ENCODE measurements at regions of chr2 and their contacts with region 1.

Region 1: DNA sequence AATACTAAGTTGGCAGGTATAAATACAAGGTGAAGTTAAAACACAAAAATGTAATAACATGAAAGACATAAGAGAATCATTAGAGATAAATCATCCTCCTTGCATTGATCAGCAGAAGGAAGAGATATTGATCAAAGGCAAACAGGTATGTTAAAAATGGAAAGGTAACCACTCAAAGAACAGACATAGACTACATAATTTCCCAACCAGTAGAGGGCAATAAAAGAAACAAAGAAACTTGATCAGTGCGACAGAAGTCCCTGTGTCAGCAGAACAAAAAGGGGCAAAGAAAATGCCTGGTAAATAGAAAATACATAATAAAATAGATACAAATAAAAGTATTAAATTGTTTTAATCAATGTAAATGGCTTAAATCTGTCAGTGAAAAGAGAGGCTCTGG is 53.6 kb downstream of the FAM228A start:
- DNase-seq: no peak
- H3K4me3 ChIP-seq: no peak overlapping the region
- H3K27ac ChIP-seq: no peak overlapping the region
- H3K4me1 ChIP-seq: no peaks in the 10 kb centered on the region
- H3K27me3 ChIP-seq: no peaks in the 10 kb centered on the region
- CTCF ChIP-seq: peak in 1 of 2 donors; percentile 47

Region 2: GRCh38 chr2:23720705-23721453 is 507.6 kb before region 1 on chr2:
- CTCF ChIA-PET with region 1: no interaction called
- dilution Hi-C with region 1: no loop called
- in situ Hi-C with region 1: no loop called
- intact Hi-C with region 1: no loop called
- DNase-seq: no peak
- H3K4me3 ChIP-seq: no peak overlapping the region
- H3K27ac ChIP-seq: no peak overlapping the region
- H3K4me1 ChIP-seq: peaks cover 9% of the 10 kb centered on the region
- H3K27me3 ChIP-seq: no peaks in the 10 kb centered on the region
- CTCF ChIP-seq: no peak

Region 3: DNA sequence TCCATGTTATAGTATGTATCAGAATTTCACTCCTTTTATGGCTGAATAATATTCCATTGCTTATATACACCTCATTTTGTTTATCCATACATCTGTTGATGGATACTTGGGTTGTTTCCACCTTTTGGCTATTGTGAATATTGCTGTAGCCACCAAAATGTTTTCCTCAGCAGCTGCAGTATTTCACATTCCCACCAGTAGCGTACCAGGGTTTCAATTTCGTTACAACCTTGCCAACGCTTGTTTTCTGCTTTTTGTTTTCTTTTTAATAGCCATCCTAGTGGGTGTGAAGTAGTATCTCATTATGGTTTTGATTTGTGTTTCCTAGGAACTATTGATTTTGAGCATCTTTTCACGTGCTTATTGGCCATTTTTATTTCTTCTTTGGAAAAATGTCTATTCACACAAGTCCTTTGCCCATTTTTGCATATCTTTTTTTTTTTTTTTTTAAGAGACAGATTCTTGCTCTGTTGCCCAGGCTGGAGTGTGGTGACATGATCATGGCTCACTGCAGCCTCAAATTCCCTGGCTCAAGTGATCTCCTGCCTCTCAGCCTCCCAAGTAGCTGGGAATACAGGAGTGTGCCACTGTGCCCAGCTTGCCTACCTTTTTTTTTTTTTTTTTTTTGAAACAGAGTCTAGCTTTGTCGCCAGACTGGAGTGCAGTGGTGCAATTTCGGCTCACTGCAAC is 274.0 kb before region 1 on chr2:
- CTCF ChIA-PET with region 1: no interaction called
- dilution Hi-C with region 1: no loop called
- in situ Hi-C with region 1: no loop called
- intact Hi-C with region 1: no loop called
- DNase-seq: no peak
- H3K4me3 ChIP-seq: no peak overlapping the region
- H3K27ac ChIP-seq: no peak overlapping the region
- H3K4me1 ChIP-seq: no peaks in the 10 kb centered on the region
- H3K27me3 ChIP-seq: no peaks in the 10 kb centered on the region
- CTCF ChIP-seq: no peak

Region 4: GRCh38 chr2:24382363-24383073 is 154.0 kb after region 1 on chr2:
- CTCF ChIA-PET with region 1: no interaction called
- dilution Hi-C with region 1: no loop called
- in situ Hi-C with region 1: loop called (anchors 10 to 25 kb)
- intact Hi-C with region 1: loop called (anchors 1 kb)
- DNase-seq: peak; percentile 42
- H3K4me3 ChIP-seq: no peak overlapping the region
- H3K27ac ChIP-seq: no peak overlapping the region
- H3K4me1 ChIP-seq: peaks cover 5% of the 10 kb centered on the region
- H3K27me3 ChIP-seq: no peaks in the 10 kb centered on the region
- CTCF ChIP-seq: peak; percentile 61 to 78

Region 5: GRCh38 chr2:24509425-24509824 is 281.0 kb after region 1 on chr2:
- CTCF ChIA-PET with region 1: no interaction called
- dilution Hi-C with region 1: no loop called
- in situ Hi-C with region 1: no loop called
- intact Hi-C with region 1: no loop called
- DNase-seq: no peak
- H3K4me3 ChIP-seq: no peak overlapping the region
- H3K27ac ChIP-seq: no peak overlapping the region
- H3K4me1 ChIP-seq: no peaks in the 10 kb centered on the region
- H3K27me3 ChIP-seq: no peaks in the 10 kb centered on the region
- CTCF ChIP-seq: no peak

Region 6: GRCh38 chr2:24559475-24560109 is 331.1 kb after region 1 on chr2:
- CTCF ChIA-PET with region 1: no interaction called
- dilution Hi-C with region 1: no loop called
- in situ Hi-C with region 1: no loop called
- intact Hi-C with region 1: no loop called
- DNase-seq: peak; percentile 4
- H3K4me3 ChIP-seq: no peak overlapping the region
- H3K27ac ChIP-seq: no peak overlapping the region
- H3K4me1 ChIP-seq: no peaks in the 10 kb centered on the region
- H3K27me3 ChIP-seq: no peaks in the 10 kb centered on the region
- CTCF ChIP-seq: no peak